H1 (cell line): ENCODE measurements at regions of chr11 and their contacts with region 1.

Region 1: DNA sequence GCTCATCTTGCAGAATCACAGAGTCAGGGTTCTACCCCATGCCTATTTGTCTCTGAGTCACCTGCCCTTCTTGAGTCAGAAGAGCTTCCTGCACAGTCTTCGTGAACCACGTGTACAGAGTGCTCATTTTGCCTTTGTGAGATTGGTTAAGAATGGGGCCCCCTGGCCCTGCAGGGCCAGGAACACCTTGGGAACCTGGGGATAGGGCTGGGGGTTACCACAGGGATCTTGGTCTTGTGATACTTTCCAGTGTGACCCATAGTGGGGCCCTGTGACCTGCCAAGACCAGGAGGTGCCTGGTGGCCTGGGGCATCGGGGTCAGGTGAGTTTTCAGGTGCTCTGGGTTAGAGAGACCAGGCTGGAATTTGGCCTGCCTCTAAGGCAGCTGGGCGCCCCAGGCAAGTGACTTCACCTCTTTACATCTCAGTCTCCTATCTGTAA is 9.4 kb downstream of the TMPRSS13 start:
- DNase-seq: no peak
- H3K4me3 ChIP-seq: no peak overlapping the region
- H3K27ac ChIP-seq: no peak overlapping the region
- H3K4me1 ChIP-seq: no peaks in the 10 kb centered on the region; a peak in 1 of 7 replicates
- H3K27me3 ChIP-seq: no peaks in the 10 kb centered on the region
- CTCF ChIP-seq: no peak
- EP300 ChIP-seq: no peak
- POLR2A ChIP-seq: no peak
- RAD21 ChIP-seq: no peak

Region 2: GRCh38 chr11:117907251-117907981 is 12.4 kb before region 1 on chr11:
- CTCF ChIA-PET with region 1: interaction called, 75 read pairs
- POLR2A ChIA-PET with region 1: no interaction called
- DNase-seq: peak; percentile 64 to 92
- H3K4me3 ChIP-seq: peak overlapping the region; percentile 2 to 34 (median 12); a peak in 4 of 8 replicates
- H3K27ac ChIP-seq: no peak overlapping the region
- H3K4me1 ChIP-seq: peaks cover 0 to 12% (median 3%) of the 10 kb centered on the region in 4 experiments; a peak in 5 of 7 replicates
- H3K27me3 ChIP-seq: no peaks in the 10 kb centered on the region
- CTCF ChIP-seq: no peak
- EP300 ChIP-seq: no peak
- POLR2A ChIP-seq: no peak
- RAD21 ChIP-seq: no peak

Region 3: GRCh38 chr11:117932067-117932370 is 12.2 kb after region 1 on chr11:
- CTCF ChIA-PET with region 1: interaction called, 16 read pairs
- POLR2A ChIA-PET with region 1: interaction called, 3 read pairs
- DNase-seq: no peak
- H3K4me3 ChIP-seq: no peak overlapping the region
- H3K27ac ChIP-seq: no peak overlapping the region
- H3K4me1 ChIP-seq: peaks cover 0 to 10% (median 5%) of the 10 kb centered on the region in 4 experiments; a peak in 6 of 7 replicates
- H3K27me3 ChIP-seq: no peaks in the 10 kb centered on the region; a peak in 1 of 7 replicates
- CTCF ChIP-seq: no peak
- EP300 ChIP-seq: no peak
- POLR2A ChIP-seq: no peak
- RAD21 ChIP-seq: no peak

Region 4: GRCh38 chr11:117941163-117941707 is 21.4 kb after region 1 on chr11:
- CTCF ChIA-PET with region 1: interaction called, 143 read pairs
- POLR2A ChIA-PET with region 1: no interaction called
- DNase-seq: no peak
- H3K4me3 ChIP-seq: no peak overlapping the region
- H3K27ac ChIP-seq: no peak overlapping the region
- H3K4me1 ChIP-seq: no peaks in the 10 kb centered on the region
- H3K27me3 ChIP-seq: no peaks in the 10 kb centered on the region; a peak in 1 of 7 replicates
- CTCF ChIP-seq: no peak
- EP300 ChIP-seq: no peak
- POLR2A ChIP-seq: no peak
- RAD21 ChIP-seq: no peak